ENCODE measurements at regions of chr1 and their contacts with region 1.

Region 1: GRCh38 chr1:209747580-209748262 is 8.1 kb upstream of the TRAF3IP3 start:
- DNase-seq: peak; percentile 93 to 96 (median 95)
- ATAC-seq: peak; percentile 99
- H3K4me3 ChIP-seq: peak overlapping the region; percentile 28
- H3K27ac ChIP-seq: no peak overlapping the region; the same call in 2 of the 3 replicates
- H3K4me1 ChIP-seq: peaks cover 5 to 7% of the 10 kb centered on the region in 2 experiments; a peak in 4 of 5 replicates
- H3K27me3 ChIP-seq: peaks cover 13 to 19% of the 10 kb centered on the region in 2 experiments
- CTCF ChIP-seq: peak; percentile 80 to 100 (median 86)
- EP300 ChIP-seq: peak; percentile 36; the same call in 1 of the 2 replicates
- POLR2A ChIP-seq: no peak
- RAD21 ChIP-seq: peak; percentile 94 to 97

Region 2: DNA sequence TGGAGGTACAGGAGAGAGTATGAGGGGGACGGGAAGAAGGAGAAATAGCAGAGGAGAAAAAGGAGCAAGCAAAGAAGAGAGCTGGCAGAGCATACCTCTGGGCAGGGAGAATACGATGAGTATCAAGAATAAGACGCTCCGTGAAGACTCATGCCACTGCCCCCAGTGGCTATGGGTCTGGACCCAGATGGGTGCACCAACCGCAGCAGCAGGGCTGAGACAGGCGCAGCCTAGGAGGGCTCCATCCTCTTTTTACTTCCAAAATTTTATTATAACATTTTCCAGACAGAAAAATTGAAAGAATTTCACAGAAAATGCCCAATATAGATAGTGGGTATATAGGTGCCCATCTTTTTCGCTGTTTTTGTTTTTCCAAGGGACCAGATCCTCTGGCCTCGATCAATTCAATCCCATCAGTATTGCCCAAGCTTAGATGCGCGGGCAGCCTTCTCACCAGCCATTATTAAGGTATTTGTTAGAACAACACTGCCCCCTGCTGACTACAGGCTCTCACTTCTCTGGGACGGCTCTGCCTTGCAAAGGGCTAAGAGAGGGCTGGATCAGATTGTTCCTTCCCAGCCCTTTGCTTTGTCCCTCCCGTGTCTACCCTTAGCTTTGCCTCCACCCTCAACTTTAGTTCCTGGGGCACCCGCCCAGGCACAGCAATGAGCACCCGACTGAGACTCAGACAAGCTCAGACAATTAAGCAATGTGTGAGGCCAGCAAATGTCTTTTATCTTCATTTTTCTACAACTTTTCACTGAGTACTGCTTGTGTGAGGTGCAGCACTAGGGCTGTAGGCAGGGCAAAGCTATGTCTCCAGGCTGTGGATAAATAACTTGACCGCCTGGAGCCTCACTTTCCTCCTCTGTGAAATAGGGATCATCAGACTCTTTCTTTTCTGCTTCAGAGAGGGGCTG is 181.7 kb before region 1 on chr1:
- CTCF ChIA-PET with region 1: interaction called, 22 read pairs
- POLR2A ChIA-PET with region 1: no interaction called
- in situ Hi-C with region 1: no loop called
- intact Hi-C with region 1: loop called (anchors 1 kb)
- DNase-seq: peak; percentile 72 to 86 (median 74)
- ATAC-seq: peak; percentile 97
- H3K4me3 ChIP-seq: no peak overlapping the region
- H3K27ac ChIP-seq: no peak overlapping the region
- H3K4me1 ChIP-seq: no peaks in the 10 kb centered on the region
- H3K27me3 ChIP-seq: peaks cover 4 to 18% of the 10 kb centered on the region in 2 experiments; a peak in 3 of 5 replicates
- CTCF ChIP-seq: peak; percentile 75 to 88 (median 87)
- EP300 ChIP-seq: no peak
- POLR2A ChIP-seq: no peak
- RAD21 ChIP-seq: peak; percentile 58 to 76

Region 3: GRCh38 chr1:209601809-209602657 is 145.7 kb before region 1 on chr1:
- CTCF ChIA-PET with region 1: interaction called, 14 read pairs
- POLR2A ChIA-PET with region 1: no interaction called
- in situ Hi-C with region 1: no loop called
- intact Hi-C with region 1: loop called (anchors 10 kb)
- DNase-seq: peak in 2 of 4 experiments; percentile 22 to 41
- ATAC-seq: peak; percentile 92
- H3K4me3 ChIP-seq: no peak overlapping the region
- H3K27ac ChIP-seq: no peak overlapping the region
- H3K4me1 ChIP-seq: no peaks in the 10 kb centered on the region
- H3K27me3 ChIP-seq: peaks cover 0 to 7% of the 10 kb centered on the region in 2 experiments; a peak in 2 of 5 replicates
- CTCF ChIP-seq: peak; percentile 56 to 82 (median 72); a peak in 5 of 6 replicates
- EP300 ChIP-seq: no peak
- POLR2A ChIP-seq: no peak
- RAD21 ChIP-seq: peak; percentile 81 to 84

Region 4: GRCh38 chr1:209643285-209644020 is 104.3 kb before region 1 on chr1:
- CTCF ChIA-PET with region 1: interaction called, 3 read pairs
- POLR2A ChIA-PET with region 1: no interaction called
- in situ Hi-C with region 1: no loop called
- intact Hi-C with region 1: loop called (anchors 1 kb)
- DNase-seq: no peak
- ATAC-seq: no peak
- H3K4me3 ChIP-seq: no peak overlapping the region
- H3K27ac ChIP-seq: no peak overlapping the region
- H3K4me1 ChIP-seq: peaks cover 37 to 66% of the 10 kb centered on the region in 2 experiments
- H3K27me3 ChIP-seq: no peaks in the 10 kb centered on the region
- CTCF ChIP-seq: peak in 1 of 3 experiments; percentile 43; a peak in 2 of 6 replicates
- EP300 ChIP-seq: no peak
- POLR2A ChIP-seq: no peak
- RAD21 ChIP-seq: peak; percentile 16 to 42; a peak in 3 of 4 replicates

Region 5: DNA sequence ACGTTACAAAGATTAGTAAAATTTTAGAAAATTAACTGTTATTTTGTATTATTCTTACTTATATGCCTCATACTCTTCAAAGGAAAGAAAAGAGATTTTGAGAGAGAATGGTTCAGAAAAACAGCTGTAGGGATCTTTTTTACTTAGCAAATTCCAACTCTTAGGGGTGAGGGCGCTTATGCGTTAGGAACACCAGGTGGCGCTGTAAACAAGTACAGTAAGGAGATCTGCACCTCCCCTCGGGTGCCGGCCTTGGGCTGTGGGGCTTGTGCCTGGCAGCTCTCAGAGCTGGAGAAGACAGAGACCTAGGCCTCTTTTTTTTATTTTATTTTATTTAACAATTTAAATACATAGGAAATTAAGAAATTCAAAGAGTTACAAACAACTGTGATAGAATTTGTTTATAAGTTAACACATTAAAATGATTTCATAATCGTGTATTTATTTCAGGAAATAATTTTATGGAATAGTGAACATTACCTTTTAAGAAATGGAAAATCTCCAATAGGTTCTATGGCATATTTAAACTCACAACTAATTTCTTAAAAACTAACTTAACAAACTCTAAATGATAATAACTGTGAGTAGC is 112.7 kb after region 1 on chr1:
- CTCF ChIA-PET with region 1: no interaction called
- POLR2A ChIA-PET with region 1: no interaction called
- in situ Hi-C with region 1: no loop called
- intact Hi-C with region 1: no loop called
- DNase-seq: peak; percentile 84 to 92 (median 91)
- ATAC-seq: peak; percentile 99
- H3K4me3 ChIP-seq: no peak overlapping the region
- H3K27ac ChIP-seq: no peak overlapping the region
- H3K4me1 ChIP-seq: no peaks in the 10 kb centered on the region
- H3K27me3 ChIP-seq: peaks cover 2 to 14% of the 10 kb centered on the region in 2 experiments; a peak in 3 of 5 replicates
- CTCF ChIP-seq: peak; percentile 89 to 94 (median 91)
- EP300 ChIP-seq: no peak
- POLR2A ChIP-seq: no peak
- RAD21 ChIP-seq: peak; percentile 92 to 96

Measured in K562 (cell line).